ENCODE measurements at regions of chr20 and their contacts with region 1.

Region 1: GRCh38 chr20:47220161-47220582 is 136.3 kb downstream of the ZMYND8 start:
- DNase-seq: peak; percentile 54
- H3K4me3 Mint-ChIP-seq: no peak overlapping the region
- H3K27ac Mint-ChIP-seq: no peak overlapping the region
- H3K4me1 Mint-ChIP-seq: peaks cover 5% of the 10 kb centered on the region
- H3K27me3 Mint-ChIP-seq: no peaks in the 10 kb centered on the region
- CTCF ChIP-seq: peak; percentile 41

Region 2: DNA sequence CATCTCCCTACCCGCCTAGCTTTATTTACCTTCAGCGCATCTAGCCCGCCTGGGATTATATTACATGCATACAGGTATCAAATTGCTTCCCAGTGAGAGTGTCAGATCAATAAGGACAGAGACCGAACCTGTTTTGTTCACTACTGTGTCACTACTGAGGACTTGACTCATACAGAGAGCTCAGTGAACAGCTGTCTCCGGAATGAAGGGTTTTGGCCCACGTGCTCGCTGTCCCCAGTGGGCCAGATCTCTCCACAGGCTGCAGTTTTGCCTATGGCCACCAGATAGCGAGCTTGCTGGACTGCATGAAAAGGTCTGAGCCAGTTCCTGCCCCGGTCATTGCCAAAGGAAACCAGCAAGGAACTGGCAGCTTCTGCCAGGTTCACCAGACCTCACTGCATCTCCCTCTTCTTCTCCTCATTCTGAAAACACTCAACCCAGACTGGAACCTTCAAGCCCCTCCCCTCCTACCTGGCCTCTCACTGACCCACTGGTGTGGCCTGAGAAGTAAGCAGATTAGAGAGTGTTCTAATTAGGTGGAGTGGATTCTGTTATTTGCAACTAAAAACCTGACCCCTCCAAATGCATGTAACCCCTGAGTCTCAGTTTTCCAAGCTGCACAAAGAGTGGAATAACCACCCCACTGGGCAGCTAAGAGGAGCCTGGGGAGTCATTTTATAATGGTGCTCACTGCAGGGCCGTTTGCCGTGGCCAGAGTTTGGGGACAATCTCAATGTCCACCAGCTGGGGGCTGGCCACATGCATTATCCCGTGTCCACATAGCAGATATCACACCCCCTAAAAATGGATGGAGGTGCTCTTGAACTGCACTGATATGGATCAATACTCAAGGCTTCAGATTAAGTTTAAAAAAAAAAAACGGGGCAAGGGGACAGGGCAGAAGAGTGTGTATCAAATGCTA is 14.3 kb before region 1 on chr20:
- CTCF ChIA-PET with region 1: interaction called, 16 read pairs
- POLR2A ChIA-PET with region 1: interaction called, 3 read pairs
- intact Hi-C with region 1: no loop called
- DNase-seq: peak; percentile 69
- H3K4me3 Mint-ChIP-seq: no peak overlapping the region
- H3K27ac Mint-ChIP-seq: no peak overlapping the region
- H3K4me1 Mint-ChIP-seq: peaks cover 6% of the 10 kb centered on the region
- H3K27me3 Mint-ChIP-seq: no peaks in the 10 kb centered on the region
- CTCF ChIP-seq: peak; percentile 67

Region 3: DNA sequence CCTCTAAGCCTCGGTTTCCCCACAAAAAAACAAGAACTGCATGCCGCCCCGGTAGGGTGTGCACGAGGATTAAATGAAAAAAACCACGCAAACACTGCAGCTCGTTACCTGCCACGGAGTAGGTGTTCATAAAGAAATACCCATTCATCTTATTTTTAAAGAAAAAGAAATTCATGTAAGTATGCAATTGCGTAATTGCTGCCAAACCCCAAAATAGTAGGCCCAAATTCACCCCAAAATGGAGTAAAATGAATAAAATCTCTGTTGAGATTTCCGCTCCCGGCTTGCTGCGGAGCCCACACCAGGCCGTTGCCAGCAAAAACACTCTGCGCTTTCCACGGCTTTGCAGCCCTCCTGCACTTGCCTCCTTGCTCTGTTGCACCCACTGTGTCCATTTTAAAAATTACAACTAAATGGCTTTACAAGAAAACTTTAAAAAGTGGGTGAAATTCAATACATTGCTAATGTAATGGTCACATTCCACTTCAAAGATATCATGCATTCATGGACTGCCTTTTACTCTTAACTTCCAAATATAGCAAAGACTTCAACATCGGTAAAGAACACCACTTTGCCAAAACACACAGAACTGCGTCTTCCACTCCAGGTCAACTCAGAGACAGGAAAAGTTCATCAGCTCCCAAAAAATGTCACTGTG is 11.3 kb after region 1 on chr20:
- CTCF ChIA-PET with region 1: interaction called, 17 read pairs
- POLR2A ChIA-PET with region 1: no interaction called
- intact Hi-C with region 1: no loop called
- DNase-seq: no peak
- H3K4me3 Mint-ChIP-seq: no peak overlapping the region
- H3K27ac Mint-ChIP-seq: no peak overlapping the region
- H3K4me1 Mint-ChIP-seq: no peaks in the 10 kb centered on the region
- H3K27me3 Mint-ChIP-seq: no peaks in the 10 kb centered on the region
- CTCF ChIP-seq: no peak